IMR-90 (cell line): ENCODE measurements at regions of chr6 and their contacts with region 1.

Region 1: GRCh38 chr6:100472674-100473073 is 8.0 kb upstream of the SIM1 start:
- DNase-seq: peak; percentile 64
- ATAC-seq: no peak
- H3K4me3 ChIP-seq: no peak overlapping the region
- H3K27ac ChIP-seq: no peak overlapping the region
- H3K4me1 ChIP-seq: no peaks in the 10 kb centered on the region
- H3K27me3 ChIP-seq: peaks cover 70% of the 10 kb centered on the region
- CTCF ChIP-seq: no peak
- POLR2A ChIP-seq: no peak
- RAD21 ChIP-seq: no peak

Region 2: GRCh38 chr6:100269189-100269588 is 203.5 kb before region 1 on chr6:
- CTCF ChIA-PET with region 1: no interaction called
- POLR2A ChIA-PET with region 1: no interaction called
- dilution Hi-C with region 1: no loop called
- in situ Hi-C with region 1: no loop called
- intact Hi-C with region 1: loop called (anchors 5 kb)
- DNase-seq: peak; percentile 85
- ATAC-seq: peak; percentile 95
- H3K4me3 ChIP-seq: no peak overlapping the region
- H3K27ac ChIP-seq: peak overlapping the region; percentile 44; the same call in 1 of the 2 replicates
- H3K4me1 ChIP-seq: peaks cover 11% of the 10 kb centered on the region
- H3K27me3 ChIP-seq: no peaks in the 10 kb centered on the region
- CTCF ChIP-seq: no peak
- POLR2A ChIP-seq: no peak
- RAD21 ChIP-seq: no peak

Region 3: DNA sequence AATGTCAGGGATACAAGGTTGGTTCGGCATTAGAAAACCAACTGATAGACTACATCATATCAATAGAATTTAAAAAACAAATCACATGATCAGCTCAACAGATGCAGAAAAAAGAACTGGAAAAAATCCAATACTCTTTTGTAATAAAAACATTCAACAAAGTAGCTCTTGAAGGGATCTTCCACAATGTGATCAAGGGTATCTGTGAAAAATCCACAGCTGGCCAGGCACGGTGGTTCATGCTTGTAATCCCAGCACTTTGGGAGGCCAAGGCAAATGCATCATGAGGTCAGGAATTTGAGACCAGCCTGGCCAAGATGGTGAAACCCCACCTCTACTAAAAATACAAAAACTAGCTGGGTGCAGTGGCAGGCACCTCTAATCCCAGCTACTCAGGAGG is 345.4 kb after region 1 on chr6:
- CTCF ChIA-PET with region 1: no interaction called
- POLR2A ChIA-PET with region 1: no interaction called
- dilution Hi-C with region 1: no loop called
- in situ Hi-C with region 1: no loop called
- intact Hi-C with region 1: no loop called
- DNase-seq: peak; percentile 13
- ATAC-seq: no peak
- H3K4me3 ChIP-seq: no peak overlapping the region
- H3K27ac ChIP-seq: no peak overlapping the region
- H3K4me1 ChIP-seq: 0 out of 2 replicates have a peak, but pooled peaks cover 2% of the 10 kb centered on the region
- H3K27me3 ChIP-seq: no peaks in the 10 kb centered on the region
- CTCF ChIP-seq: no peak
- POLR2A ChIP-seq: no peak
- RAD21 ChIP-seq: no peak